IMR-90 (cell line): ENCODE measurements at regions of chr10 and their contacts with region 1.

Region 1: GRCh38 chr10:110993024-110993693 is 73.8 kb downstream of the SHOC2 start:
- DNase-seq: peak; percentile 91
- ATAC-seq: peak; percentile 92
- H3K4me3 ChIP-seq: no peak overlapping the region
- H3K27ac ChIP-seq: no peak overlapping the region
- H3K4me1 ChIP-seq: peaks cover 1% of the 10 kb centered on the region; the same call in 1 of the 2 replicates
- H3K27me3 ChIP-seq: no peaks in the 10 kb centered on the region
- CTCF ChIP-seq: no peak
- POLR2A ChIP-seq: no peak
- RAD21 ChIP-seq: no peak

Region 2: GRCh38 chr10:110746254-110746826 is 246.8 kb before region 1 on chr10:
- CTCF ChIA-PET with region 1: no interaction called
- POLR2A ChIA-PET with region 1: no interaction called
- dilution Hi-C with region 1: no loop called
- in situ Hi-C with region 1: no loop called
- intact Hi-C with region 1: loop called (anchors 10 kb)
- DNase-seq: peak; percentile 71
- ATAC-seq: peak; percentile 90
- H3K4me3 ChIP-seq: no peak overlapping the region
- H3K27ac ChIP-seq: no peak overlapping the region
- H3K4me1 ChIP-seq: no peaks in the 10 kb centered on the region; the same call in 1 of the 2 replicates
- H3K27me3 ChIP-seq: peaks cover 5% of the 10 kb centered on the region
- CTCF ChIP-seq: peak; percentile 81
- POLR2A ChIP-seq: 0 out of 2 replicates have a peak, but pooled peaks have one; percentile 30
- RAD21 ChIP-seq: peak; percentile 90

Region 3: DNA sequence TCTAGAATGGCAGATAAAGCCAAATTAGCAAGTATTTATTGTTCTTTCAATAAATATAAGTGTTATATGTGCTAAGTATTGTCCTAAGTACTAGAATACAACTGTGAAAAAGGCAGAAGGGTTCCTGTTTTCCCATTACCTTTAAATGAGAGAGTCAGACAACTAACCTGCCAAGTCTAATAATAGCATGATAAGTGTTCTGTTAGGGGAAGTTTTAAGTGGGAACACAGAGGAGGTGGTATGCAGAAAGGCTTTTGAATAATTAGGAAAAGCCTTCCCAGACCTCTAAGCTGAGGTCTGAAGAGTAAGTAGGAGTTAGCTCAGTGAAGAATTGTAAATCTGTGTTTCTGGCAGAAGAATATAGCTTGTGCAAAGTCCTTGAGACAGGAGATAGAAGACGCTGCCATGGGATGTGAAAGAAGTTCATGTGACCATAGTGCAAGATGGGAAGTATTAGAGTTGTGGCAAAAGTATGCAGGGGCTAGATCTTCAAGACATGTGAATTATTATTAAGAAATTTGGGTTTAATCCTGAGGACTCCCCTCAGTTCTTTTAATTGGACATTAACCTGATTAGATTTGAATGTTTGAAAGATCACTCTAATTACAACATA is 61.3 kb before region 1 on chr10:
- CTCF ChIA-PET with region 1: no interaction called
- POLR2A ChIA-PET with region 1: no interaction called
- dilution Hi-C with region 1: no loop called
- in situ Hi-C with region 1: no loop called
- intact Hi-C with region 1: loop called (anchors 5 kb)
- DNase-seq: no peak
- ATAC-seq: no peak
- H3K4me3 ChIP-seq: no peak overlapping the region
- H3K27ac ChIP-seq: no peak overlapping the region
- H3K4me1 ChIP-seq: peaks cover 5% of the 10 kb centered on the region
- H3K27me3 ChIP-seq: no peaks in the 10 kb centered on the region
- CTCF ChIP-seq: no peak
- POLR2A ChIP-seq: no peak
- RAD21 ChIP-seq: no peak

Region 4: GRCh38 chr10:111289461-111289860 is 296.3 kb after region 1 on chr10:
- CTCF ChIA-PET with region 1: no interaction called
- POLR2A ChIA-PET with region 1: no interaction called
- dilution Hi-C with region 1: no loop called
- in situ Hi-C with region 1: no loop called
- intact Hi-C with region 1: no loop called
- DNase-seq: no peak
- ATAC-seq: no peak
- H3K4me3 ChIP-seq: no peak overlapping the region
- H3K27ac ChIP-seq: no peak overlapping the region
- H3K4me1 ChIP-seq: no peaks in the 10 kb centered on the region
- H3K27me3 ChIP-seq: no peaks in the 10 kb centered on the region
- CTCF ChIP-seq: no peak
- POLR2A ChIP-seq: no peak
- RAD21 ChIP-seq: no peak